Astrocyte of the cerebellum (primary cell): ENCODE measurements at regions of chr11 and their contacts with region 1.

Region 1: GRCh38 chr11:36296895-36297604 is 962 bp downstream of the PRR5L start:
- DNase-seq: no peak
- H3K4me3 ChIP-seq: no peak overlapping the region
- CTCF ChIP-seq: no peak

Region 2: DNA sequence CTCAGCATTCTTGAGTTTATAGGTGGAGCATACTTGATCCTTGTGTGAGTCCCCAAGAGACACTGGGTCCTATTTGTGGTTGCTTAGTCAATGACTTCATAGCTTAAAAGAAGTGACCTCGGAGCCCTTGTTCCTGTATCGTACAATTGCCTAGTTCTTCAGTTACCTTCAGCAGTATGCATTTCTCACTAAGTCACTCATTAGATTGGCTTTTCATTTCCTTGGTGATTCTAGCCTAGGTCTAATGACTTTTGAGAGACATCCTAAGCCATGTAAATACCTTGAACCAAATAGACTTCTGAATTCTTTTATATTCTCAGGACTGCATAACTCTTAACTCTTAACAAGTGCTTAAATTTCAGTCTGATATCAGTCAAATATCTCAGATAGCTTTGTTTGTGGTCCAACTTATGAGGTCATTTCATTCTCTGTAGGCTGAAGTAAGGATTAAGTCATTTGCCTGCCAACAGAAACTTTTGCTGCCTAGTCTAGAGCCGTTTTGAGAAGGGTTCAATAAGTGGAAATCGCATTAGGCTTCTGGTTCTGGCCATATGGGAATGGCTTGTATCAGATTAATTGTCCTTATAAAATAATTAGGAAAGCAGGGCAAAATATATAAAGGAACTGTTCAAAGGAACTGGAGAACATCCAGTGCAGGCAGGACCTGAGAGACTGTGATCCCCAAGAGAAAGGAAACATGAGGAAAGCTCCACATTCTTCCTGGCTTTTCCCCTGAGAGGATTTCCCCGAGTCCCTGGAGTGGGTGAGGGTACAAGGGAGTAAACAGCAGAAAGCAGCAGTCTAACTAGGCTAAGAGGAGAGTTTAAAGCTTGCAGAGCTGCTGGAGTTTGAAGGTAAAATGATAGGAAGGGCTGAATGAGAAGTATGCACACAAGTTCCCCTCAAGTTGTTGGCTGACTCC is 173.1 kb after region 1 on chr11:
- in situ Hi-C with region 1: loop called (anchors 5 kb)
- DNase-seq: no peak
- H3K4me3 ChIP-seq: no peak overlapping the region
- CTCF ChIP-seq: no peak